ENCODE measurements at regions of chr2 and their contacts with region 1.

Region 1: DNA sequence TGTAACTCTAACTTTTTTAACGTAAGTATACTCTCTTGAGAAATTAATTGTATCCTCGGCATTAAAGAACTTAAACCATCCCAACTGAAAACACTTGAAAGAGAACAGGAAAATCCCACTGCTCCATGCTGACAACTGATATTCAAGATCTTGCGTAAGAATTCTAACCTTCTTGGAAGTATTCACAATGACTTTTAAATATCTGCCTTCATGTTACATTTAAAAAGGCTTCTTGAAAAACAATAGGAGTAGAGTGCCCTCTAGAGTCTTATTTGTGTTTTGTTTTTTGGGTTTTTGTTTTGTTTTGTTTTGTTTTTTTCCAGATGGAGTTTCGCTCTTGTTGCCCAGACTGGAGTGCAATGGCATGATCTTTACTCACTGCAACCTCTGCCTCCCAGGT is 65.4 kb upstream of the DNAJC10 start:
- DNase-seq: no peak
- ATAC-seq: peak; percentile 87

Region 2: DNA sequence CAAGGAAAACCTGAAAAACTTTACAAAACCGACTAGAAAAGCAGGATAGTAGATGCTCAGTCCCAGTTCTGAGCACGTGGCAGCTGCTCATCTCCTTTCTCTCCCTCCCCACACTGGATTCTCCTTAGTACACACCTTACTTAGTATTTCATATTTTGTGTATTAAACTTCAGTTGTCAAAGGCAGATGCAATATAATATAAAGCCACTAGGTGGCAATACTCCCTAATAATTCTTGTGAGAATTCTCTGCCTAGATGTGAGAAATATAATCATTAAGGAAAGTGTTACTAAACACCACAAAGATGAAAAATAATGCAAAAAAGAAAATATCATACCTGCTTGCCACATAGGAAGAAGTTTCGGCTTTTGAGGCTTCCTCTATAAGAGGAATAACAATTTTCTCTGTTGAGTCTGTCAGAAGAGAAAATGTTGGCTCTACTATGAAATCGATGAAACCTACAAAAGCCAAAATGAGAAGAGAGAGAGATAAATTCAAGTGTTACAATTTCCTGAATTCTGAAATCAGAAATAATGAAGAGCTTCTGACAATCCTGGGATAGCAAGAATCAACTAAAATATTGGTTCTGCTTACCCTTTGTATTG is 464.5 kb before region 1 on chr2:
- intact Hi-C with region 1: loop called (anchors 10 kb)
- DNase-seq: no peak
- ATAC-seq: peak; percentile 57

Region 3: DNA sequence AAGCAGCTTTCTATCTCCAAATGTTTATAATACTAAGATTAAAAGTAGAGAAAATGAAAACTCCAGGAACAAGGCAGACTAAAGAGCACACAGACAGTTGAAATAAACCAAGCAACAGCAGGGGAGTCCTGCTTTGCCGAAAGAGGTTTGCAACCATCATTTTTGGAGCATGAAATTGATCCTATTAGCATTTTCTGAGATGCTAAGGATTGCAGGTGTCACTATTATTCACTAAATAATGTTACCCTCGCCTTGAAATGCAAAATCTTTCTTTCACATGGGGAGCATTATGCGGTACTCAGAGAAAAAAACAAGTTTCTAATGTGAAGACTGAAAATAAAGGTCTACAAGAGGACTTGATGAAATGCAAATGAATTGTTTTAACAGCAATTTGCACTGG is 16.3 kb before region 1 on chr2:
- intact Hi-C with region 1: loop called (anchors 1 kb)
- DNase-seq: no peak
- ATAC-seq: no peak